Gastrocnemius medialis (tissue), 4 donors: ENCODE measurements at regions of chr10 and their contacts with region 1.

Region 1: GRCh38 chr10:93445097-93445960 is 36.8 kb downstream of the MYOF start:
- DNase-seq: peak; percentile 65 to 76
- ATAC-seq: peak; percentile 55 to 71
- H3K4me3 ChIP-seq: no peak overlapping the region
- H3K27ac ChIP-seq: peak overlapping the region; percentile 19 to 67 (median 56)
- H3K4me1 ChIP-seq: peaks cover 0 to 11% of the 10 kb centered on the region in 2 donors
- H3K27me3 ChIP-seq: no peaks in the 10 kb centered on the region
- CTCF ChIP-seq: no peak
- POLR2A ChIP-seq: no peak

Region 2: GRCh38 chr10:93461807-93462178 is 16.5 kb after region 1 on chr10:
- in situ Hi-C with region 1: no loop called
- intact Hi-C with region 1: loop called (anchors 2 kb)
- DNase-seq: no peak
- ATAC-seq: no peak
- H3K4me3 ChIP-seq: no peak overlapping the region
- H3K27ac ChIP-seq: peak overlapping the region in 3 of 4 donors; percentile 36 to 86 (median 53)
- H3K4me1 ChIP-seq: peaks cover 21 to 36% of the 10 kb centered on the region in 2 donors
- H3K27me3 ChIP-seq: peaks cover 0 to 6% (median 0%) of the 10 kb centered on the region in 3 donors
- CTCF ChIP-seq: no peak
- POLR2A ChIP-seq: no peak

Region 3: GRCh38 chr10:93697207-93697606 is 251.9 kb after region 1 on chr10:
- in situ Hi-C with region 1: no loop called
- intact Hi-C with region 1: no loop called
- DNase-seq: no peak
- ATAC-seq: no peak
- H3K4me3 ChIP-seq: no peak overlapping the region
- H3K27ac ChIP-seq: no peak overlapping the region
- H3K4me1 ChIP-seq: peaks cover 12 to 20% of the 10 kb centered on the region in 2 donors
- H3K27me3 ChIP-seq: no peaks in the 10 kb centered on the region
- CTCF ChIP-seq: no peak
- POLR2A ChIP-seq: no peak